ENCODE measurements at regions of chr10 and their contacts with region 1.

Region 1: DNA sequence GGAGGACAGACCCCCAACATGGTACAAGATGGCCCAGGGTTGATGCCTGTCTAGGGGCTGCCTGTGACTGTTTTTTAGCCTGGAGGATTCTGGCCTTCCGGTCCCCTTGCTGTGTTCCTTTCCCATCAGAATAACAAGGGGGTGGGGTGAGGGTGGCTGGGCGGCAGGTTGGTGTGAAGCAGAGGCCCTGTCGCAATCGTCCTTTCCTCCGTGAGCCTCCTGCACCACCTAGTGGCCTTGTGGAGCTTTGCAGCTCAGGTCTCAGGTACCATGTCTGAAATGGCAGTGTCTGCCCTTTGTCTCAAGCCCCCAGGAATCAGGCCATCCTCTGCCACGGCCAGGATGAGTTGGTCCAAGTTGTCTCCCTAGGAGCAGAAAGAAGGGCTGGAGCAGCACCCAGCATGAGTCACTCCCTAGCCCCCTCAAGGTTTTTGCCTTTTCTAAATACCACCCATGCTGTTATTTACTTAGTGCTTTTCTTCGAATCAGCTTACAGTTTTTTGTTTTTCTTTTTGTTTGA is 24.2 kb downstream of the TACR2 start:
- DNase-seq: peak; percentile 88
- H3K4me3 Mint-ChIP-seq: no peak overlapping the region
- H3K27ac Mint-ChIP-seq: peak overlapping the region; percentile 67
- H3K4me1 Mint-ChIP-seq: peaks cover 32% of the 10 kb centered on the region
- H3K27me3 Mint-ChIP-seq: no peaks in the 10 kb centered on the region

Region 2: GRCh38 chr10:69237528-69238159 is 154.9 kb before region 1 on chr10:
- CTCF ChIA-PET with region 1: interaction called, 101 read pairs
- POLR2A ChIA-PET with region 1: interaction called, 9 read pairs
- DNase-seq: peak; percentile 91
- H3K4me3 Mint-ChIP-seq: no peak overlapping the region
- H3K27ac Mint-ChIP-seq: no peak overlapping the region
- H3K4me1 Mint-ChIP-seq: peaks cover 63% of the 10 kb centered on the region
- H3K27me3 Mint-ChIP-seq: no peaks in the 10 kb centered on the region

Region 3: DNA sequence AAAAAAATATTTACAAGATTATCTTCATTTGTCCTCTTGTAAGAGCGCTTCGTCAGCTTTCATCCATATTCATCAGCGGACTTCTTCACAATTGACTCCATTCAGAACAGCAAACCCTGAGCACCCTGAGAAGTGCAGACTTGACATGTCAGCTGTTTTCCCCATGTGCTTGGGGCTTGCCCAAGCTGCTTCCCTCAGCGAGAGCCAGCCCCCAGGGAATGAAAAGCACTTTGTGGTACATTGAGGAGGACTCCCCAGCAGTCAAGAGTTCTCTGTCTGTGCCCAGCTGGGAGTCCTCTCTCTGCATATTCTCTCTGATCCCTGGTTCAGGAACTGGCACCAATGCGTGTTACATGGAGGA is 149.7 kb before region 1 on chr10:
- CTCF ChIA-PET with region 1: interaction called, 101 read pairs
- POLR2A ChIA-PET with region 1: interaction called, 9 read pairs
- DNase-seq: no peak
- H3K4me3 Mint-ChIP-seq: no peak overlapping the region
- H3K27ac Mint-ChIP-seq: no peak overlapping the region
- H3K4me1 Mint-ChIP-seq: peaks cover 39% of the 10 kb centered on the region
- H3K27me3 Mint-ChIP-seq: no peaks in the 10 kb centered on the region

Region 4: GRCh38 chr10:69318106-69318866 is 74.3 kb before region 1 on chr10:
- CTCF ChIA-PET with region 1: interaction called, 12 read pairs
- POLR2A ChIA-PET with region 1: interaction called, 10 read pairs
- DNase-seq: peak; percentile 92
- H3K4me3 Mint-ChIP-seq: peak overlapping the region; percentile 97
- H3K27ac Mint-ChIP-seq: peak overlapping the region; percentile 94
- H3K4me1 Mint-ChIP-seq: peaks cover 55% of the 10 kb centered on the region
- H3K27me3 Mint-ChIP-seq: no peaks in the 10 kb centered on the region

Region 5: GRCh38 chr10:69418052-69418752 is 25.7 kb after region 1 on chr10:
- CTCF ChIA-PET with region 1: no interaction called
- POLR2A ChIA-PET with region 1: no interaction called
- DNase-seq: no peak
- H3K4me3 Mint-ChIP-seq: no peak overlapping the region
- H3K27ac Mint-ChIP-seq: no peak overlapping the region
- H3K4me1 Mint-ChIP-seq: peaks cover 4% of the 10 kb centered on the region
- H3K27me3 Mint-ChIP-seq: peaks cover 1% of the 10 kb centered on the region

Measured in activated CD4-positive, alpha-beta memory T cell treated with anti-CD3 and anti-CD28 coated beads, Interleukin-2, amount 10 ng/mL, durations not matched to agents 7 days and 5 days (primary cell).